Activated CD4-positive, alpha-beta memory T cell treated with anti-CD3 and anti-CD28 coated beads, Interleukin-2, amount 10 ng/mL, durations not matched to agents 7 days and 5 days (primary cell): ENCODE measurements at regions of chr7 and their contacts with region 1.

Region 1: DNA sequence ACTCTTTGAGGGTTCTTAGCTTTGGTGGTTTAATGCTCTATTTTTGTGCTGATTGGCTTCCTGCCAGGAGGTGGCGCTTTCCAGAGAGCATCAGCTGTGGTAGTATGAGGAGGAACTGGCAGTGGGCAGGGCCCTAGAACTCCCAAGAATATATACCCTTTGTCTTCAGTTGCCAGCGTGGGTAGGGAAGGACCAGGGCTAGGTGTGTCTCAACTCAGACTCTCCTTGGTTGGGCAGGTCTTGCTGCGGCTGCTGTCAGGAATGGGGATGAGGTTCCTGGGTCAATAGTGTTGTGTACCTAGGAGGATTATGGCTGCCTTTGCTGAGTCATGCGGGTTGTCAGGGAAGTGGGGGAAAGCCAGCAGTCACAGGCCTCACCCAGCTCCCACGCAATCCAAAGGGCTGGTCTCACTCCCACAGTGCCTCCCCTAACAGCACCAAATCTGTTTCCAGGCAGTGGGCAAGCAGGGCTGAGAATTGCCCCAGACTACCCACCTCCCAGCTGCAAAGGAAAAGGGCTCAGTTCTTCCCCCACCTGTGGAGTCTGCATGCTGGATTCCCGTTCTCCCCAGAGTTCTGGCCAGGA is 191.5 kb downstream of the PHTF2 start:
- DNase-seq: peak; percentile 25
- H3K4me3 Mint-ChIP-seq: no peak overlapping the region
- H3K27ac Mint-ChIP-seq: no peak overlapping the region
- H3K4me1 Mint-ChIP-seq: peaks cover 2% of the 10 kb centered on the region
- H3K27me3 Mint-ChIP-seq: peaks cover 20% of the 10 kb centered on the region

Region 2: DNA sequence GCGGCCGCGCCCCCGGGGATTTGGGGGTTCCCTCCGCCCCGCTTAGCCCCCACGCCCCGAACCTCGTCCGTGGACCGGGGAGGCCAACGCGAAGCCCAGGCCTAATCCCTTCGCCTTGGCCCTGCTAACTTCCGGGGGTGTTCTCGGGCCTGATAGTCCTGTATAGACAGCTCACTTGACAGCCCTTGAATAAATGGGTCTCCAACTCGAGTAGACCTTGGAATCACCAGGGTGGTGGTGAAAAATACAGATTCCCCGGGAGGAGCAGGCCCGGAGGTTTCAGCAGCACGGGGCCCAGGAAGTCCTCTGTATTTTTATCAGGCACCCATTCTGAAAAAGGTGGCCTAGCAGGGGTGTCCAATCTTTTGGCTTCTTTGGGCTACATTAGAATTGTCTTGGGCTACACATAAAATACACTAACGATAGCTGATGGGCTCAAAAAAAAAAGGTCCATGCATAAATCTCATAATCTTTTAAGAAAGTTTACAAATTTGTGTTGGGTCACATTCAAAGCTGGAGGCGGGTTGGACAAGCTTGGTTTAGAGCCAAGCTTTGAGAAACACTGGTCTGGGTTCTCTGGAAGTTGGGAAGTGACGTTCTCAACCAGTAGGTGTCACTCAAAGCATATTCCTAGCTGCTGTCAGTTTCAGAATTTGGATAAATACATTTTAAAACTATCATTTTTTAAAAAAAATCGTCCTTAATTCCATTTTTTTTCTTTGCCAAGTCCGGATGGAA is 30.2 kb after region 1 on chr7:
- CTCF ChIA-PET with region 1: interaction called, 12 read pairs
- POLR2A ChIA-PET with region 1: no interaction called
- DNase-seq: peak; percentile 29
- H3K4me3 Mint-ChIP-seq: peak overlapping the region; percentile 61
- H3K27ac Mint-ChIP-seq: peak overlapping the region; percentile 41
- H3K4me1 Mint-ChIP-seq: peaks cover 14% of the 10 kb centered on the region
- H3K27me3 Mint-ChIP-seq: peaks cover 26% of the 10 kb centered on the region